Psoas muscle (tissue), 8 donors: ENCODE measurements at regions of chrX and their contacts with region 1.

Region 1: GRCh38 chrX:16826207-16826606 is 39.9 kb downstream of the TXLNG start:
- DNase-seq: no peak
- ATAC-seq: peak; percentile 32 to 61 (median 53)
- H3K4me3 ChIP-seq: no peak overlapping the region
- H3K27ac ChIP-seq: no peak overlapping the region
- H3K4me1 ChIP-seq: peaks cover 7% of the 10 kb centered on the region
- H3K27me3 ChIP-seq: no peaks in the 10 kb centered on the region
- CTCF ChIP-seq: peak; percentile 65

Region 2: DNA sequence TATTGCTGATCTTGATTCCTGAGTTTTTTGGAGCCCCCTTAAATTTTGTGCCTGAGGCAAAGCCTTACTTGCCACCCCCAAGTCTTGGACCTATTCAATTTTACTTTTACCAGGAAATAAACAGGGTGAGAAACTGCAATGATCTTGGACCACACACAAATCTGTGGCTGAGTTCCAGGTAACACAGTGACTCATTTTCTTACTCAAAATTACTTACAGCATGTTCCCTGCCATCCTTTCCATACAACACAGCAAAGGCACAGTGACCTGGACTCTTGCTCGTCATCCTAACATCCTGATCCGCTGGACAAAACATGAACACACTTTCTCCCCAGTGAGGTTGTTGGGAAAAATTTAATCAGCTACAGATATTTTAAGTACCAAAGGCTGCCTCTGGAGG is 237.0 kb before region 1 on chrX:
- intact Hi-C with region 1: no loop called
- DNase-seq: no peak
- ATAC-seq: no peak
- H3K4me3 ChIP-seq: no peak overlapping the region
- H3K27ac ChIP-seq: no peak overlapping the region
- H3K4me1 ChIP-seq: peaks cover 6% of the 10 kb centered on the region
- H3K27me3 ChIP-seq: no peaks in the 10 kb centered on the region
- CTCF ChIP-seq: no peak

Region 3: GRCh38 chrX:16870095-16870860 is 44.1 kb after region 1 on chrX and contains the start of gene RBBP7:
- intact Hi-C with region 1: no loop called
- DNase-seq: peak; percentile 95 to 98
- ATAC-seq: peak; percentile 94 to 97 (median 96)
- H3K4me3 ChIP-seq: peak within 1 kb of the TSS; percentile 79
- H3K27ac ChIP-seq: peak within 1 kb of the TSS; percentile 94
- H3K4me1 ChIP-seq: peaks cover 15% of the 10 kb centered on the region
- H3K27me3 ChIP-seq: peaks cover 0 to 8% (median 0%) of the 10 kb centered on the region in 3 donors
- CTCF ChIP-seq: no peak
- total RNA-seq, gene RBBP7: 81.1 to 107 (median 90.5) TPM

Region 4: GRCh38 chrX:16993791-16994318 is 167.6 kb after region 1 on chrX:
- intact Hi-C with region 1: no loop called
- DNase-seq: no peak
- ATAC-seq: no peak
- H3K4me3 ChIP-seq: no peak overlapping the region
- H3K27ac ChIP-seq: no peak overlapping the region
- H3K4me1 ChIP-seq: no peaks in the 10 kb centered on the region
- H3K27me3 ChIP-seq: no peaks in the 10 kb centered on the region
- CTCF ChIP-seq: no peak

Region 5: GRCh38 chrX:17046478-17047097 is 220.4 kb after region 1 on chrX:
- intact Hi-C with region 1: loop called (anchors 2 to 5 kb)
- DNase-seq: peak in 1 of 2 donors; percentile 22
- ATAC-seq: peak; percentile 75 to 93 (median 83)
- H3K4me3 ChIP-seq: no peak overlapping the region
- H3K27ac ChIP-seq: no peak overlapping the region
- H3K4me1 ChIP-seq: no peaks in the 10 kb centered on the region
- H3K27me3 ChIP-seq: no peaks in the 10 kb centered on the region
- CTCF ChIP-seq: peak; percentile 73